OCI-LY7 (cell line): ENCODE measurements at regions of chrX and their contacts with region 1.

Region 1: GRCh38 chrX:13087322-13088155 is 43.1 kb upstream of the FAM9C start:
- DNase-seq: peak; percentile 89
- H3K4me3 ChIP-seq: peak overlapping the region; percentile 44
- H3K27ac ChIP-seq: peak overlapping the region; percentile 98
- H3K4me1 ChIP-seq: peaks cover 94% of the 10 kb centered on the region
- CTCF ChIP-seq: no peak

Region 2: DNA sequence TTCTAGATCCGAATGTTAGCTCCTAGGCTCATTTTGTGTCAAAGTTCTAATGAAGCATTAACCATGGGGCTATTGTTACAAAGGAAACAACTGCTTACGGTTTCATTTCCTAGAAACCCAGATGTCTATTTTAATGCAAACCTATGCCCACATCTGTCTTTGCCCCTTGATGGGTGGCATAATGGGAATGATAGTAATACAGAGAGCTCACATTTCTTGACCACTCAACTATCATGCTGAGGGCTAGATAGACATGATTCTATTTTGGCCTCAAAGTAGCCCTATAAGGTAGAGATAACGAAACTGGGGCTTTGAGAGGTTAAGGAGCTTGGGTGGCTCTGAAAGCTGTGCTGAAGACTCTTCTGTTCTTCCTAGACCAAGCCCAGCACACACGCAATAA is 218.8 kb before region 1 on chrX:
- CTCF ChIA-PET with region 1: no interaction called
- POLR2A ChIA-PET with region 1: no interaction called
- intact Hi-C with region 1: loop called (anchors 10 kb)
- DNase-seq: peak; percentile 38
- H3K4me3 ChIP-seq: peak overlapping the region; percentile 67
- H3K27ac ChIP-seq: peak overlapping the region; percentile 90
- H3K4me1 ChIP-seq: peaks cover 77% of the 10 kb centered on the region
- CTCF ChIP-seq: no peak

Region 3: GRCh38 chrX:12881914-12882313 is 205.6 kb before region 1 on chrX:
- CTCF ChIA-PET with region 1: no interaction called
- POLR2A ChIA-PET with region 1: no interaction called
- intact Hi-C with region 1: no loop called
- DNase-seq: no peak
- H3K4me3 ChIP-seq: no peak overlapping the region
- H3K27ac ChIP-seq: no peak overlapping the region
- H3K4me1 ChIP-seq: peaks cover 6% of the 10 kb centered on the region
- CTCF ChIP-seq: no peak

Region 4: DNA sequence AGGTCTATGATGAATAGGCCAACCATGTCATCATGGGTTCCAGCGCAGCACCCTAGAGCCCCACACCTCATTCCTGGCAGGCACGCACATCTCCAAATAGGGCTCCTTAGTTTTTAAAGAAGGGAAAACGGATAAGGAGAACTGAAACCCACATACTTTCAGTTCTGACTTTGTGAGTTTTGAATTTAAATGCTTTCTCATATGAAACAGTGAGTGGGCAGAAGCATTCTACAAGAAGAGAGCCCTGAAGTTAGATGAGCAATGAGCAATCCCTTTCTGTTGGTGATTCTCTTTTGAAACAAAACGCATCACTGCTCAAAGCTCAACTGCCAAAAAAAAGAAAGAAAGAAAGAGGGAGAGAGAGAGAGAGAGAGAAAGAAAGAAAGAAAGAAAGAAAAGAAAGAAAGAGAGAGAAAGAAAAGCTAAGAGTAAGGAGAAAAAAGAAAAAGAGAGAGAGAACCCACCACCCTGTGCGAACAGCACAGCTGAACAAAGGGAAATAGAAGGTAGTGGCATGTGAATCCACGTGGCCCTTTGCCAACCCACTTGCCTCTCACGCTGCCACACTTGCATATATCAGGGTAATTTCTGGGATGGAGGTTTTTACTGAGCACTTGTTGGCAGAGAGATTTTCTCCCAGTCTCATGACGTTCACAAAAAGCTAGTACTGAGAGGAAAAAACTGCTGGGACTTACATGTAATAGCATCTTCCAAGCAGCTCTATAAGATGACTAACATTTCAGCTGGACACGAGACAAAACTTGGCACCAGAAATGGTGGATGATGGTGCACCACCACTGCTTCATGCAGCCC is 81.7 kb before region 1 on chrX:
- CTCF ChIA-PET with region 1: interaction called, 3 read pairs
- POLR2A ChIA-PET with region 1: interaction called, 7 read pairs
- intact Hi-C with region 1: loop called (anchors 2 kb)
- DNase-seq: peak; percentile 50
- H3K4me3 ChIP-seq: peak overlapping the region; percentile 27
- H3K27ac ChIP-seq: peak overlapping the region; percentile 19
- H3K4me1 ChIP-seq: peaks cover 71% of the 10 kb centered on the region
- CTCF ChIP-seq: no peak

Region 5: DNA sequence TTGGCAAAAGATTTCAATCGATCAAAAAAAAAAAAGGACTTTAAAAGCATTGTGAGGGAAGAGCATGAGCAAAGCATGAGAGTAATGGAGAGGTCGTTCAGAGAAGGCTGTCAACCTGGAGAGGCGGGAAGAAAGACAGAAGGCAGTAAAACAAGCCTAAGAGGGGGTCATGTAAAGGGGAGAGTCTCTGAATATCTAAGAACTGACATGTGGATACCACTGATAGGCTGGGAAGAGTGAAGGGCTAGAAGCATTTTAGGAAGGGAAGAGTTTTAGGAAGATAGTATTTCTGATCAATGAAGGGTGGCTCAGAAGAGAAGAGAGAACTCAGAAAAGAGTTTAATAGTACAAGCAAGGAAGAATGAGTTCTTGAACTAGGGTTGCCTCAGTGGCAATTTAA is 50.6 kb before region 1 on chrX:
- CTCF ChIA-PET with region 1: no interaction called
- POLR2A ChIA-PET with region 1: no interaction called
- intact Hi-C with region 1: no loop called
- DNase-seq: no peak
- H3K4me3 ChIP-seq: no peak overlapping the region
- H3K27ac ChIP-seq: no peak overlapping the region
- H3K4me1 ChIP-seq: peaks cover 3% of the 10 kb centered on the region
- CTCF ChIP-seq: no peak

Region 6: DNA sequence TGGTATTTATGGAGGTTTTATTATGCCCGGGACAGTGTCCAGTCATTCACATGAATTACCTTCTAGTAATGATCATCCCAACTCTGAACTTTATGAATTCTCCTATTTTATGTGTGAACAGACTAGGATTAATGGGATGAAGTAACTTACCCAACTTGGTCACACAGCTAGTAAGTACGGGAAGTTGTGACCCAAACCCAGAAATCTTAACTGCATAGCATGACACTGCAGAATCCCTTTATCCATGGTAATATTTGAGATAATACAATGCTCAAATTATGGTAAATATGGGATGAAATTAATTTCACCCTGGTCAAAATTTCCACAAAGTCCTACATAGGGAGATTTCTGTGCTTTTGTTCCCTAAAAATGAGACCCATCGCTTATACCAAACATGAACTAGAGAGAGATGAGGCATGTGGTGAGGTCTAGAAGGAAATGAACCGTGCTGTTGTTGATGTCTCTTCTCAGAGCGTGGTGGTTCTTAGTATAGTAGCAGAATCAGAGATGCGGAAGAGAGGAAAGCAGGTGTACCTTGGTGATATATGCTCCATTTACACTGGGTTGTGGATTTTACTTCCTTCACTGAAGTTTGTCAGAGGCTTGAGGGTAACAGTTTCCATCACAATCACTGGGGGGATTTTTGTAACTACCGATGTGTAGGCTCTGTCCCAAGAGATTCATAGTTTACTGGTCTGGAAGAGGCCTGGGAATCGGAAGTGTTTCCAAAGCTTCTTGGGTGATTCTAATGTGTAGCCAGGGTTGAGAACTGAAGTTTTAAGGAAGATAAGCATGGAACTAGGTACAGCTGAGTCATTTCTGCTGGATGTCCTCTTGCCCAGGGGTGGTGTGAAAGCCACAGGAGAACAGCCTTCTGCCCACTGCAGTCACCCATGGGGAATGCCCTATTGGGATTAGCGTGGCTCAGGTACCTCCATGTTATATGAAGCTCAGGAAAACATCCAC is 13.0 kb before region 1 on chrX:
- CTCF ChIA-PET with region 1: interaction called, 4 read pairs
- POLR2A ChIA-PET with region 1: interaction called, 25 read pairs
- intact Hi-C with region 1: loop called (anchors 1 kb)
- DNase-seq: peak; percentile 87
- H3K4me3 ChIP-seq: peak overlapping the region; percentile 50
- H3K27ac ChIP-seq: peak overlapping the region; percentile 95
- H3K4me1 ChIP-seq: peaks cover 63% of the 10 kb centered on the region
- CTCF ChIP-seq: no peak

Region 7: GRCh38 chrX:13487731-13488523 is 400.4 kb after region 1 on chrX:
- CTCF ChIA-PET with region 1: no interaction called
- POLR2A ChIA-PET with region 1: interaction called, 3 read pairs
- intact Hi-C with region 1: loop called (anchors 5 kb)
- DNase-seq: peak; percentile 73
- H3K4me3 ChIP-seq: peak overlapping the region; percentile 49
- H3K27ac ChIP-seq: peak overlapping the region; percentile 63
- H3K4me1 ChIP-seq: peaks cover 23% of the 10 kb centered on the region
- CTCF ChIP-seq: peak; percentile 74